A673 (cell line): ENCODE measurements at regions of chr16 and their contacts with region 1.

Region 1: DNA sequence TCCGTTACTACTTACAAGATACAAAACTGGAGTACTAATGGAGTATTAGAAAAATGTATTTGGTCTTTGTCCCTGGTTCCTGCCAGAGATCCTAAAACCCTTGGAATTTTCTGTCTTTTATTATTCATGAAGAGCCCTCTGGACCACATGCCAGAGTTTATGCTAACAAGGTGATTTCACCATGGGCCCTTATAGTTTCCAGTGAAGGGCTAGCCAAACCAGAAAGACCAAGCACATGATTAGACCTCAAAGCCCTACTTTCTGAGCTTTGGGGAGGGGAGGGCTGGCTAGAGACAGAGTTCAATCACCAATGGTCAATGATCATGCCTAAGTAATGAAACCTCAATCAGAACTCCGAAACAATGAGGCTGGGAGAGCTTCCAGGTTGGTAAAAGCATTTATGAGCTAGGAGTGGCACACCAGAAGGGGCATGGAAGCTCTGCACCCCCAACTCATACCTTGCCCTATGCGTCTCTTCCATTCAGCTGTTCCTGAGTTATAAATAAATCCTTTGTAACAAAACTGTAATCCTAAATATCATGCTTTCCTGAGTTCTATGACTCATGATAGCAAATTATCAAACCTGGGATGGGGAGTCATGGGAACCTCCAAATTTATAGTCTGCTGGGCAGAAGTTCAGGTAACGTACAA is 10.4 kb downstream of the DCUN1D3 start:
- DNase-seq: no peak
- H3K4me3 ChIP-seq: no peak overlapping the region
- H3K27ac ChIP-seq: no peak overlapping the region
- H3K4me1 ChIP-seq: no peaks in the 10 kb centered on the region
- H3K27me3 ChIP-seq: no peaks in the 10 kb centered on the region
- CTCF ChIP-seq: no peak

Region 2: GRCh38 chr16:20938426-20938825 is 48.7 kb after region 1 on chr16:
- CTCF ChIA-PET with region 1: no interaction called
- POLR2A ChIA-PET with region 1: no interaction called
- intact Hi-C with region 1: no loop called
- DNase-seq: no peak
- H3K4me3 ChIP-seq: no peak overlapping the region
- H3K27ac ChIP-seq: no peak overlapping the region
- H3K4me1 ChIP-seq: no peaks in the 10 kb centered on the region
- H3K27me3 ChIP-seq: no peaks in the 10 kb centered on the region
- CTCF ChIP-seq: no peak

Region 3: DNA sequence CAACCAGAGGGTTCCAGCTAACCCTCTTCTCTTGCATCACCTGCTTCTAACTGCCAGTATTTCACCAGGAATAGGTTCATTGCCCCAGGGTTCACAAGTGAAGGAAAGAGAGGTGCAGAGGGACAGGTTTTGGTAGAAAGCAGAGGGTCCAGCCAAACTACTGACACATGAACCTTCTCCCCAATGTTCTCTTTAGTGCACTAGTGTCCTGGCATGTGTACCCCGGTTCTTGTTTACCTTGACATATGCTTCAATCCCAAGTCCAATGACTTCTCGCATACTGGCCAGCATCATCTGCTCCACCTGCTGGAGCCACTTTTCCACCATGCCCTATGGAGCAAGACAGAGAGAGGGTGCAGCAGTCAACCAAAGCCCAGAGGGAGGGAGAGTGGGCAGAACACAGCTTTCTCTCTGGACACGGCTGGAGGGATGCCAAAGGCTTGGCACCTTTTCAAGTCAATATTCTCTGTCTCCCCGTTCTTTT is 170.3 kb after region 1 on chr16:
- CTCF ChIA-PET with region 1: no interaction called
- POLR2A ChIA-PET with region 1: interaction called, 15 read pairs
- intact Hi-C with region 1: no loop called
- DNase-seq: no peak
- H3K4me3 ChIP-seq: no peak overlapping the region
- H3K27ac ChIP-seq: no peak overlapping the region
- H3K4me1 ChIP-seq: no peaks in the 10 kb centered on the region
- H3K27me3 ChIP-seq: peaks cover 22% of the 10 kb centered on the region
- CTCF ChIP-seq: no peak

Region 4: DNA sequence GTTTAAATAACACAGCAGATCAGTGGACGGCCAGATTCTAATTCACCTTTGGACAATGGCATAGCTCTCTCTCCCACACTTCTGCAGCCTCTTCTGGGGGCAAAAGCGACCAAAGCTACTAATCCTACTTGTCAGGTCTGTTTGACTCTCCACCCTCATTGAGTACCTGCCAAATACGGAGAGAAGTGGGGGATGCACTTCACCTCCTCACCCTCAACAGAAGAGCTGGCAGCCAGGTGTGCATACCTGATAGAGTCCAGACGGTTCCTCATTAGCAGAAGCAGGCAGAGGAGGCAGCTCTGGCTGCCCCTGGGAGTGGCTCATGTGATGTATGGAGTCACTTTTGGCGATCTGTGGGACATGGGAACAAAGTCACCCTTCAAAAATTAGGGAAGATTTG is 256.0 kb after region 1 on chr16:
- CTCF ChIA-PET with region 1: no interaction called
- POLR2A ChIA-PET with region 1: no interaction called
- intact Hi-C with region 1: no loop called
- DNase-seq: no peak
- H3K4me3 ChIP-seq: no peak overlapping the region
- H3K27ac ChIP-seq: no peak overlapping the region
- H3K4me1 ChIP-seq: no peaks in the 10 kb centered on the region
- H3K27me3 ChIP-seq: no peaks in the 10 kb centered on the region
- CTCF ChIP-seq: no peak